AG04449 (cell line): ENCODE measurements at regions of chr5 and their contacts with region 1.

Region 1: DNA sequence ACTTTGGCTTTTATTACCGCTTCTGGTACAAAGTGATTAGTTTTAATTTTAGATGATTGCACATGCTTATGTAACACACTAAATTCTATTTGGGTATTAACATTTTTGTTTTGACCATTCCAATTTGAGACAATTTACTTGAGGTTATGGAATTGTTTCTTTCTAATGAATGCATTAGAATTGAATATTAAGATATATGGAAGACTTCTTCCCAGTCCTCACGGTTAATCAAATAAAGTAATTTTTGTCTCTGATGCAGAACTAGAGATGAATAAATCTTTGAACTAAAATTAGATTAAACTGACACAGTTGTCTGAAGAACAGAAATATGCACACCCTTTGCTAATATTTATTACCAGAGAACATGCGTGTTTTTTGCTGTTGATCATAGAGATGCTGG is 127.1 kb upstream of the FBXL17 start:
- DNase-seq: no peak
- H3K4me3 ChIP-seq: no peak overlapping the region
- CTCF ChIP-seq: no peak

Region 2: GRCh38 chr5:108521841-108522506 is 13.0 kb after region 1 on chr5:
- CTCF ChIA-PET with region 1: interaction called, 10 read pairs
- POLR2A ChIA-PET with region 1: no interaction called
- DNase-seq: peak; percentile 23
- H3K4me3 ChIP-seq: no peak overlapping the region
- CTCF ChIP-seq: peak; percentile 66

Region 3: GRCh38 chr5:108681079-108681921 is 172.3 kb after region 1 on chr5:
- CTCF ChIA-PET with region 1: no interaction called
- POLR2A ChIA-PET with region 1: no interaction called
- DNase-seq: peak; percentile 37
- H3K4me3 ChIP-seq: no peak overlapping the region
- CTCF ChIP-seq: peak; percentile 73

Region 4: DNA sequence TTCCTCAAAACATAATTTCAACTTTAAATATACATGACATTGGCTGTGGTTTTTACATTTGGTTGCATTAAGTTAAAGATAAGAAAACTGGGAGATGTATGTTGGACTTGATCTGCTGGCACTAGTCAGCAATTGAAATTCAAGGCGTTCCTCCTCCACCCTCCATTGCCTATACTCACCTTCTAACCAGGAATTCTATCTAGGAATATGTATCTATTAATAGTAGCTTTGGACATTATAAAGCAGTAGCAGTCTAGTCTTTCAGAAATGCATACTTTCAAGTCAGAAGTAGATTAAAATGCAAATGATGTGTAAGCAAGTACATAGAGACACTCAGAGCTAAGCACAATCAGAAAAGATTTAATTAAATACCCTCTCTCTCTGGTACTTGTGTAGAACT is 263.6 kb after region 1 on chr5:
- CTCF ChIA-PET with region 1: no interaction called
- POLR2A ChIA-PET with region 1: no interaction called
- DNase-seq: no peak
- H3K4me3 ChIP-seq: no peak overlapping the region
- CTCF ChIP-seq: no peak

Region 5: DNA sequence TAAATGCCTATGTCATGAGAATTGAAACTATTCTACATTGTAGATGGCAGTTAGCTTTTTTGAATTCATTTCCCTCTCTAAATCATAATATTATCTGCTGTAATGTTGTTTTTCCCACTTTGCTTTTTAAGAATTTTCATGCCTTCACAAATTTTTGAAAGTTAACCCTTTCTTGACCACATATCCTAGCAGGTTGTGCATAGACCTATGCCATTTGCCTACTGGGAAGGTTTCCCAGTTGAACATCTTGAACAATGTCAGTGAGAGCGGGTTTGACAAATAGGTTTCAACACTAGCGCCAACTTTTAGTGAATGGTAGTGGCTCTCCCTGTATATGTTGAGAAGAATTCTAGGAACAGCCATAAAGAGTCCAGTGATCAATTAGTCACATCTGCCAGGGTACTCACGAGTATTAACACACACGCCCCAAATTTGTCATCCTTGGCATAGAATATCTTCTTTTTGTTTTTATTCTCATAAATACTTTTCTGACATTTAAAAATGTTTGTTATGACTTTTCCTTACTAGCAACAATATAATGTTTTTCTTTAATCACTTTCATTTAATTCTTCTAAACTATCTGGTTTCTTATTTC is 593.2 kb after region 1 on chr5:
- CTCF ChIA-PET with region 1: no interaction called
- POLR2A ChIA-PET with region 1: no interaction called
- DNase-seq: no peak
- H3K4me3 ChIP-seq: no peak overlapping the region
- CTCF ChIP-seq: no peak